Activated T-helper 2 cell treated with anti-CD3 and anti-CD28 coated beads, Interferon-gamma antibody, Interleukin-2, Interleukin-4, amounts not matched to agents 10 μg/mL and 5 μg/mL and 100 μg/mL, durations not matched to agents 14 hours and 24 hours and 36 hours (primary cell): ENCODE measurements at regions of chr3 and their contacts with region 1.

Region 1: DNA sequence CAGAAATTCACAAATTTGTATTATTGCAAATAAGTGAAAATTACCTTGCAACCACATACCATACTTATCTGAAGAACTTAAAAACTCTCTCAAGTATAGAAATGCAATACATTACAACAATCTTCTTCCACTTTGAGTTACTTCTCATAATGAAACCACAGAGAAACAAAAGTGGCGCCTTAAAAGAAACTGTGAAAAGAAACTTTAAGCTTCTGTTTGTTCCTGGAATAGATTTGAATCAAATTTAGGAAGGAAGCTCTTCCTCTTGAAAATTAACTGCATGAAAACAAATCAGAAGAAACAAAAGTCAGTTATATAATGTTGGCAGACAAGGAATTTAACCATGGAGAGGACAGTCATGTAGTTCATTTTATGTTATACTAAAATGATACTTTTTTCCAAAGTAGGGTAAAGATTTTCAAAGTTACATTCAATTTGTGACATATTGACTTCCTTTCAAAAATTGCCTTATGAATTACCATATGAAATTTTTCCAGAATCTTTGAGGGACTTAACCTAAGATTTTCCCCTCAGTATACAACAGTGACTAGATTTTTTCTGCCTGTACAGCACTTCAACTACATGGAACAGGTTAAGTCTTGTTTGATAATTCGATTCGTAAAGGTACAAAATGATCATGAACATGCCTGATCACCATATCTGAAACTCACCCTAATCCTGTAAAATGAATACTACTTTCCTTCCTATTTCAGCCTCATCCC is 57.6 kb upstream of the TNFSF10 start:
- DNase-seq: no peak
- H3K4me3 Mint-ChIP-seq: peak overlapping the region; percentile 49
- H3K27ac Mint-ChIP-seq: peak overlapping the region; percentile 82
- H3K4me1 Mint-ChIP-seq: peaks cover 91% of the 10 kb centered on the region
- H3K27me3 Mint-ChIP-seq: no peaks in the 10 kb centered on the region

Region 2: GRCh38 chr3:172562871-172563863 is 17.7 kb before region 1 on chr3:
- intact Hi-C with region 1: loop called (anchors 1 kb)
- DNase-seq: peak; percentile 32
- H3K4me3 Mint-ChIP-seq: peak overlapping the region; percentile 40
- H3K27ac Mint-ChIP-seq: peak overlapping the region; percentile 89
- H3K4me1 Mint-ChIP-seq: peaks cover 47% of the 10 kb centered on the region
- H3K27me3 Mint-ChIP-seq: no peaks in the 10 kb centered on the region